ENCODE measurements at regions of chr14 and their contacts with region 1.

Region 1: DNA sequence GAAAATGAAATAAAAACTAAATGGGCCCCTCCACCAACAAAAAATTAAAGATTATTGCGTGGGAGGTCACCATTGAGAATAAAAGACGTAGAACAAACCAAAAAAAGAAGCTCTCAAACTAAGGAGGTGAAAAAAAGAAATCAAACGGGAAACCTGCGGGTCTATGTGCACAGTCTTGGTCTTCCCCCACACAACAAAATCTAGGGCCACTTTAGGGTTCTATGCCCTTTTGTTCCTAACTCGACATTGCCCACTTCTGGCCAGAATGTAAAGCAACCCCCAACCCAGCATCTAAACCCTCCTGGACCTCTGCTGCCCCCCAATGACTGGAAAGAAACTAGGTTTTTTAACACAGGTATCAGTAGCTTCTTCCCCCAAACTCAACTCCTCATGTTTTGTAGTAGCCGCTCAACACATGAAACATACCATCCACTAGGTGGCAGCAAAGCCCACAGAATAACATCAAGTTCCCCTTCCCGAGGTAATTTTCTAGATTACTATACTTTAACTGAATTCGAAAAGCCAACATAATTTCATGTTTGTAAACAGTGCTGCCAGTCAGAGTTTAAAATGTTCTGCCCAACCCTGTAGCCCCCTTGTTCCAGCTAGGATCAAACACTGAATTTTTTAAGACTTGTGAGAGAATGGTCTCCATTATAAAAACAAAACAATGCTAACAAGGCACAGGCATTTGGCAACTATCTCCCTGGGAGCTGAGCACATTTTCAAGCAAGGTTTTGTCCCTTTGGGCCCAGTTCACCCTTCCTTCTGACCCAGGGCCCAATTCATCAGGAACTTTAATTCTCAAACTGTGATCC is 18.7 kb downstream of the DAD1 start:
- DNase-seq: peak; percentile 86
- H3K4me3 Mint-ChIP-seq: peak overlapping the region; percentile 85
- H3K27ac Mint-ChIP-seq: peak overlapping the region; percentile 90
- H3K4me1 Mint-ChIP-seq: peaks cover 71% of the 10 kb centered on the region
- H3K27me3 Mint-ChIP-seq: no peaks in the 10 kb centered on the region

Region 2: DNA sequence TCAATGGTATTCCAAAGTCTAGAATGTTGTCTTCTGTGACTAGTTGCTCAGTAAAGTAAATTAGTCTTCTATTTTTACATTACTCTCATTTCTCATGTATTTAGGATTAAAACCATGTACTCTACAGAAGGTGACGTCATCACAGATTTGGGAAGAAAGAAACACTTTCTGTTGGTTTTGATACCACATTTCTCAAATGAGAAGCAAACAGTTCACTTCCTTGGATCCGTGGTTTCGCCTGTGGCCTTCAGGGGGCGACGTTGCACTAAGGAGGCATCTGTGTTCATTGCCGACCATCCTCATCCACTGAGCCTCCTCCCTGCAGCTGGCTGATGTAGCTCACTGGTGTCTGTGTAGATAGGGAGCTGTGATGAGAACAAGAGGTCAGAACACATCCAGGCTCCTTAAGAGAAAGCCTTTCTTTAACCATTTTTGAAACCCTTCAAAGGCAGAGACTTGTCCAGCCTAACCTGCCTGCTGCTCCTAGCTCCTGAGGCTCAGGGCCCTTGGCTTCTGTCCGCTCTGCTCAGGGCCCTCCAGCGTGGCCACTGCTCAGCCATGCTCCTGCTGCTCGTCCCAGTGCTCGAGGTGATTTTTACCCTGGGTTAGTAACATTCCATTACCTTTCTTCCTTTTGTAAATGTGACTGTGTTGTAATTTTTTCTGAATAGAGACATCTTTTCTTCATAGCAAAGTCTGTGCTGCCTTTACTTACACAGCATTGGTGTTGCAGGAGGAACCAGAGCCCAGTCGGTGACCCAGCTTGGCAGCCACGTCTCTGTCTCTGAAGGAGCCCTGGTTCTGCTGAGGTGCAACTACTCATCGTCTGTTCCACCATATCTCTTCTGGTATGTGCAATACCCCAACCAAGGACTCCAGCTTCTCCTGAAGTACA is 676.1 kb before region 1 on chr14:
- intact Hi-C with region 1: no loop called
- DNase-seq: peak; percentile 41
- H3K4me3 Mint-ChIP-seq: peak overlapping the region; percentile 85
- H3K27ac Mint-ChIP-seq: peak overlapping the region; percentile 82
- H3K4me1 Mint-ChIP-seq: peaks cover 11% of the 10 kb centered on the region
- H3K27me3 Mint-ChIP-seq: peaks cover 3% of the 10 kb centered on the region

Region 3: GRCh38 chr14:22589096-22589839 is 18.9 kb after region 1 on chr14 and contains the start of gene DAD1:
- intact Hi-C with region 1: loop called (anchors 1 kb)
- DNase-seq: peak; percentile 100
- H3K4me3 Mint-ChIP-seq: peak within 1 kb of the TSS; percentile 91
- H3K27ac Mint-ChIP-seq: peak within 1 kb of the TSS; percentile 96
- H3K4me1 Mint-ChIP-seq: peaks cover 55% of the 10 kb centered on the region
- H3K27me3 Mint-ChIP-seq: no peaks in the 10 kb centered on the region
- total RNA-seq, gene DAD1: 228 and 229 TPM in 2 replicates

Region 4: GRCh38 chr14:22668417-22668816 is 98.1 kb after region 1 on chr14:
- intact Hi-C with region 1: no loop called
- DNase-seq: no peak
- H3K4me3 Mint-ChIP-seq: no peak overlapping the region
- H3K27ac Mint-ChIP-seq: no peak overlapping the region
- H3K4me1 Mint-ChIP-seq: no peaks in the 10 kb centered on the region
- H3K27me3 Mint-ChIP-seq: no peaks in the 10 kb centered on the region

Region 5: DNA sequence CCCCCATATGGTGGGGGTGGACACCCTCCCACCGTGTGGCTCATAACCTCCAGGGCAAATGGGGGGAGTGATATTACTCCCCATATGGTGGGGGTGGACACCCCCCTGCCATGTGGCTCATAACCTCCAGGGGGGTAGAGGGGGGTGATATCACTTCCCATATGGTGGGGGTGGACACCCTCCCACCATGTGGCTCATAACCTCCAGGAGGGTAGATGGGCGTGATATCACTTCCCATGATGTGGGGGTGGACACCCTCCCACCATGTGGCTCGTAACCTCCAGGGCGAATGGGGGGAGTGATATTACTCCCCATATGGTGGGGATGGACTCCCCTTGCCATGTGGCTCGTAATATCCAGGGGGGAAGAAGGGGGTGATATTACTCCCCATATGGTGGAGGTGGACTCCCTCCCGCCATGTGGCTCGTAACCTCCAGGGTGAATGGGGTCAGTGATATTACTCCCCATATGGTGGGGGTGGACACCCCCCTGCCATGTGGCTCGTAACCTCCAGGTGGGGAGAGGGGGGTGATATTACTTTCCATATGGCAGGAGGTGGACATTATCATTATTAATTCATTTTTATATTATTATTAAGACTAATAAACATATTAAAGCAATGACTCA is 145.0 kb after region 1 on chr14:
- intact Hi-C with region 1: loop called (anchors 5 kb)
- DNase-seq: no peak
- H3K4me3 Mint-ChIP-seq: no peak overlapping the region
- H3K27ac Mint-ChIP-seq: no peak overlapping the region
- H3K4me1 Mint-ChIP-seq: peaks cover 17% of the 10 kb centered on the region
- H3K27me3 Mint-ChIP-seq: peaks cover 24% of the 10 kb centered on the region

Region 6: GRCh38 chr14:22852940-22853767 is 282.8 kb after region 1 on chr14:
- intact Hi-C with region 1: loop called (anchors 1 kb)
- DNase-seq: peak; percentile 80
- H3K4me3 Mint-ChIP-seq: peak overlapping the region; percentile 81
- H3K27ac Mint-ChIP-seq: peak overlapping the region; percentile 82
- H3K4me1 Mint-ChIP-seq: peaks cover 42% of the 10 kb centered on the region
- H3K27me3 Mint-ChIP-seq: peaks cover 13% of the 10 kb centered on the region

Region 7: GRCh38 chr14:22918804-22919600 is 348.7 kb after region 1 on chr14 and contains the start of gene RBM23:
- intact Hi-C with region 1: loop called (anchors 5 kb)
- DNase-seq: peak; percentile 99
- H3K4me3 Mint-ChIP-seq: peak within 1 kb of the TSS; percentile 95
- H3K27ac Mint-ChIP-seq: peak within 1 kb of the TSS; percentile 100
- H3K4me1 Mint-ChIP-seq: peaks cover 54% of the 10 kb centered on the region
- H3K27me3 Mint-ChIP-seq: peaks cover 4% of the 10 kb centered on the region
- total RNA-seq, gene RBM23: 86.4 and 90.5 TPM in 2 replicates

Measured in activated T-helper 1 cell treated with anti-CD3 and anti-CD28 coated beads, Interleukin-12 subunit alpha, Interleukin-12 subunit beta, Interleukin-2, Interleukin-4 antibody, amounts not matched to agents 30 ng/mL and 10 ng/mL and 1 ng/mL, durations not matched to agents 14 hours and 24 hours and 36 hours (primary cell).